MCF 10A (cell line): ENCODE measurements at regions of chr12 and their contacts with region 1.

Region 1: GRCh38 chr12:8544295-8544694 is 3.6 kb upstream of the CLEC4E start:
- DNase-seq: peak; percentile 56
- H3K4me3 Mint-ChIP-seq: no peak overlapping the region
- H3K27ac Mint-ChIP-seq: no peak overlapping the region
- H3K4me1 Mint-ChIP-seq: no peaks in the 10 kb centered on the region
- H3K27me3 Mint-ChIP-seq: peaks cover 58% of the 10 kb centered on the region
- CTCF ChIP-seq: peak; percentile 84

Region 2: DNA sequence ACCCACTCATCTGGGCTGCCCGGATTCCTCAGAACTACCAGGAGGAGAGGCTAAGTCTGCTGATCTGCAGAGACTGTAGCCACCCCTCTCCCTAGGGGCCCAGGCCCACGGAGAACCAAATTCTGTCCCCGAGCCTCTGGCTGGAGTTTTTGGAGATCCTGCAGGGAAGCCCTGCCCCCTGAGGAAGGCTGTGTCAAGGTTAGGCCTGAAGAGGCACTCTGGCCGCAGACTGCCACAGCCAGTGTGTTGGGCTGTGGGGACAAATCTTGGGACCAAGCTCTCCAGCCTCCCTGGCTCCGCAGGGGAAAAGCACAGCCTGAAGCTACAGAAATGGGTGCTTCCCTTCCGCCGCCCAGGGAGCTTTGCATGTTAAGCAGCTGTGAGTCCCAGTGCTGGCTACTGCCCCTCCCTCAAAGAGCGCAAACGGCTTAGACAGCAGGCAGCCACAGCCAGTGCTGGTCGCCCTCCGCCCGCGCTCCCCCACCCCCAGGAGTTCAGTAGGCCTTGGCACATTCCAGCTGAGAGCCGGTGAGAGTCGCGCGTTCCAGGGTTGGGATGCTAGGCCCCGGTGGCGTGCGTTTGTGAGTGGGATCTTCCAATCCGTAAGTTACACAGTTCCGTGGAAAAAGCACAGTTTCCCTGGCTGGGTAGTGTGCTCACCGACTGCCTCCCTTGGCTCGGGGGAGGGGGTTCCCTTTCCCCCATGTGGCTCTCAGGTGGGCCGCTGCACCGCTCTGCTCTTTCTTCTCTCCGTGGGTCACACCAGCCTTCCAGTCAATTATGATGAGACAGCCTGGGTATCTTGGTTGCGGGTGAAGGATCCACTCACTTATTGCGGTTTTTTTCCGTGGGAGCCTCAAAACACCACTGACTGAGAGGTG is 16.8 kb before region 1 on chr12:
- CTCF ChIA-PET with region 1: interaction called, 27 read pairs
- POLR2A ChIA-PET with region 1: no interaction called
- intact Hi-C with region 1: no loop called
- DNase-seq: no peak
- H3K4me3 Mint-ChIP-seq: no peak overlapping the region
- H3K27ac Mint-ChIP-seq: no peak overlapping the region
- H3K4me1 Mint-ChIP-seq: no peaks in the 10 kb centered on the region
- H3K27me3 Mint-ChIP-seq: peaks cover 65% of the 10 kb centered on the region
- CTCF ChIP-seq: no peak

Region 3: GRCh38 chr12:8564656-8565055 is 20.4 kb after region 1 on chr12:
- CTCF ChIA-PET with region 1: interaction called, 23 read pairs
- POLR2A ChIA-PET with region 1: no interaction called
- intact Hi-C with region 1: no loop called
- DNase-seq: no peak
- H3K4me3 Mint-ChIP-seq: no peak overlapping the region
- H3K27ac Mint-ChIP-seq: no peak overlapping the region
- H3K4me1 Mint-ChIP-seq: no peaks in the 10 kb centered on the region
- H3K27me3 Mint-ChIP-seq: no peaks in the 10 kb centered on the region
- CTCF ChIP-seq: no peak

Region 4: DNA sequence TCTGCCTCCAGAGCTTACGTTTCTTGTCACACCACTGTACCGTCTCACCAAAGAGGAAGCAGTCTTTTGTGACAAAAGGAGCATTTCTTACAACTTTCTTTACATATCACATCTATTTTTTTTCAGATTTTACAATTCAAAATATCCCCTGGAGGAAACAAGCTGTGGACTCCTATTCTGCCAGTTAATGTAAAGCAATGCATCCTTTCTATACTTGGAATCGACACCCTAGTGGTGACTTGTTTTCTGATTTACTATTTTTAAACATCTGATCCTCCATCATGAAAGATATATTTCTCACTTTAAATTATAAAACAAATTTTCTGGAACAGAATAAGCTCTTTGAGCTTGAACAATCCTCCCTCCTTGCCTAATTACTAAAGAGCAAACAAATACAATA is 33.6 kb after region 1 on chr12:
- CTCF ChIA-PET with region 1: interaction called, 13 read pairs
- POLR2A ChIA-PET with region 1: no interaction called
- intact Hi-C with region 1: no loop called
- DNase-seq: no peak
- H3K4me3 Mint-ChIP-seq: no peak overlapping the region
- H3K27ac Mint-ChIP-seq: no peak overlapping the region
- H3K4me1 Mint-ChIP-seq: no peaks in the 10 kb centered on the region
- H3K27me3 Mint-ChIP-seq: peaks cover 21% of the 10 kb centered on the region
- CTCF ChIP-seq: no peak

Region 5: GRCh38 chr12:8609061-8609570 is 64.8 kb after region 1 on chr12:
- CTCF ChIA-PET with region 1: interaction called, 135 read pairs
- POLR2A ChIA-PET with region 1: no interaction called
- intact Hi-C with region 1: loop called (anchors 1 kb)
- DNase-seq: peak; percentile 55
- H3K4me3 Mint-ChIP-seq: peak overlapping the region; percentile 63
- H3K27ac Mint-ChIP-seq: no peak overlapping the region
- H3K4me1 Mint-ChIP-seq: peaks cover 10% of the 10 kb centered on the region
- H3K27me3 Mint-ChIP-seq: peaks cover 36% of the 10 kb centered on the region
- CTCF ChIP-seq: peak; percentile 75

Region 6: DNA sequence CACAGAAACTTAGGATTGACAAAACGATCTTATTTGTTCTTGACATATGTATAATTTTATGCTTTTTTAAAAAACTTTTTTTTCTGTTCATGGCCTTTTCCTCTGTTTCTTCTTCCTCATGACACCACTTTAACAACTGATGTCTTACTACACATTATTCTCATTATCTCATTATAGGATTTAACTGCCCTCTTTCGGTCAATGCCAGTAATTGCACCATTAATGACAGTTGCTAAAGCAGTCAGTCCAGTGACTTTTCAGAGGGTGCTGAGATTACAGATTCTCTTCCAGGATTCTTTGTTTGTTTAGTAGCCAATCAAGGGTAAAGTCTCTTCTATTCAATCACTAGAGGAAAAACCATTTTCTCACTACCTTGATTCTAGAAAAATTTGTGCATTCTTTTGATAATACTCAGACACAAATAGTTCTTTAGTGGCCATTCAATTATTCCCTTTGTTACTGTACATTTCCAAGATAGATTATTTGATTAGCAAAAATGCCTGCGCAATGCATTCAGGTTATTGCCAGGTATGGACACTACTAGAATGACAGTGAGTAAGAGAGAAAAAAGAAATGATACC is 495.2 kb after region 1 on chr12:
- CTCF ChIA-PET with region 1: interaction called, 11 read pairs
- POLR2A ChIA-PET with region 1: no interaction called
- intact Hi-C with region 1: loop called (anchors 5 kb)
- DNase-seq: peak; percentile 57
- H3K4me3 Mint-ChIP-seq: no peak overlapping the region
- H3K27ac Mint-ChIP-seq: no peak overlapping the region
- H3K4me1 Mint-ChIP-seq: no peaks in the 10 kb centered on the region
- H3K27me3 Mint-ChIP-seq: no peaks in the 10 kb centered on the region
- CTCF ChIP-seq: peak; percentile 78